GM12878 (cell line): ENCODE measurements at regions of chr1 and their contacts with region 1.

Region 1: DNA sequence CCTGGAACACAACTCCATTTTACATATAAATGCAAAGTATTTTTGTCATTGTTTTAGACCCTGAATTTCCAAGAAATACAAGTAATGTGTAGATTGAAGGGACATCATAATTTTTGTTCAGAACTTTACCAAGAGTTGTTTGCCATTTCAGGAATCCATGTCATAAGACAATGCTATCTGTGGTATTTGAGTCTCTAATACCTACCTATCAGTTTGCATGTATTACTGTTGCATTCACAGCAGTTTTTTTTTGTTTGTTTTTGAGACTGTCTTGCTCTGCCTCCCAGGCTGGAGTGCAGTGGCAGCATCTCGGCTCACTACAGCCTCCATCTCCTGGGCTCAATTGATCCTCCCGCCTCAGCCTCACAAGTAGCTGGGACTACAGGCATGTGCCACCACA is 17.1 kb downstream of the MPZ start:
- DNase-seq: no peak
- ATAC-seq: no peak
- H3K4me3 ChIP-seq: no peak overlapping the region
- H3K27ac ChIP-seq: no peak overlapping the region
- H3K4me1 ChIP-seq: peaks cover 2% of the 10 kb centered on the region; the same call in 1 of the 2 replicates
- H3K27me3 ChIP-seq: no peaks in the 10 kb centered on the region
- CTCF ChIP-seq: no peak
- EP300 ChIP-seq: no peak
- POLR2A ChIP-seq: no peak
- RAD21 ChIP-seq: no peak

Region 2: DNA sequence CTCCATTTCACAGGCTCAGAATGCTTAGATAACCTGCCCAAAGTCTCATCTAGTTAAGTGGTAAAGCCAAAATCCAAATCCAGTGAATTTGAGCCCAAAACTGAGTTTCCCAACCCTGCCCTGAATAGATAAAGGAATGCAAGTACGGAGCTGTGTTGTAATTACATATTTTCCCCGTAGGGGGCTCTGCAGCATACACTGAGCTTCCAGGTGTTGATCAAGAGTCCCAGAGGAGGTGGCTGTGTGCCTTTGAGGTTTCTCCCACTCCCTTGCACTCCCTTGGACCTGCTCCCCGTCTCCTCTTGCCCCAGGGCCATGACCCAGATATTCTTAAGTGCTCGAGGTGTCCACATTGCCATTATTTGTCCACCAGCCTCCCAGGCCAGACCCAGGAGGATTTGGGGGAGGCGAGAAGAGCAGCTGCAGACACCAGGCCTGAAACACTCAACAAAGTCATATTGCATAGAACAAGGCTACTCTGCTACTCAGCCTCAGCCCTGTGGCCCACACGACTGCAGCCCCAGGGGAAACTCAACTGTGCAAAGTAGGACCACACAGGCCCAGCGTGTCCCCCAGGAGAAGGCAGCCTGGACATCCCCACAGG is 515.0 kb before region 1 on chr1:
- CTCF ChIA-PET with region 1: no interaction called
- POLR2A ChIA-PET with region 1: no interaction called
- RAD21 ChIA-PET with region 1: no interaction called
- SMC1A ChIA-PET with region 1: no interaction called
- in situ Hi-C with region 1: no loop called
- intact Hi-C with region 1: no loop called
- DNase-seq: no peak
- ATAC-seq: peak; percentile 36
- H3K4me3 ChIP-seq: no peak overlapping the region
- H3K27ac ChIP-seq: no peak overlapping the region
- H3K4me1 ChIP-seq: peaks cover 50% of the 10 kb centered on the region
- H3K27me3 ChIP-seq: no peaks in the 10 kb centered on the region
- CTCF ChIP-seq: peak; percentile 66 to 78 (median 67)
- EP300 ChIP-seq: no peak
- POLR2A ChIP-seq: no peak
- RAD21 ChIP-seq: peak; percentile 81

Region 3: DNA sequence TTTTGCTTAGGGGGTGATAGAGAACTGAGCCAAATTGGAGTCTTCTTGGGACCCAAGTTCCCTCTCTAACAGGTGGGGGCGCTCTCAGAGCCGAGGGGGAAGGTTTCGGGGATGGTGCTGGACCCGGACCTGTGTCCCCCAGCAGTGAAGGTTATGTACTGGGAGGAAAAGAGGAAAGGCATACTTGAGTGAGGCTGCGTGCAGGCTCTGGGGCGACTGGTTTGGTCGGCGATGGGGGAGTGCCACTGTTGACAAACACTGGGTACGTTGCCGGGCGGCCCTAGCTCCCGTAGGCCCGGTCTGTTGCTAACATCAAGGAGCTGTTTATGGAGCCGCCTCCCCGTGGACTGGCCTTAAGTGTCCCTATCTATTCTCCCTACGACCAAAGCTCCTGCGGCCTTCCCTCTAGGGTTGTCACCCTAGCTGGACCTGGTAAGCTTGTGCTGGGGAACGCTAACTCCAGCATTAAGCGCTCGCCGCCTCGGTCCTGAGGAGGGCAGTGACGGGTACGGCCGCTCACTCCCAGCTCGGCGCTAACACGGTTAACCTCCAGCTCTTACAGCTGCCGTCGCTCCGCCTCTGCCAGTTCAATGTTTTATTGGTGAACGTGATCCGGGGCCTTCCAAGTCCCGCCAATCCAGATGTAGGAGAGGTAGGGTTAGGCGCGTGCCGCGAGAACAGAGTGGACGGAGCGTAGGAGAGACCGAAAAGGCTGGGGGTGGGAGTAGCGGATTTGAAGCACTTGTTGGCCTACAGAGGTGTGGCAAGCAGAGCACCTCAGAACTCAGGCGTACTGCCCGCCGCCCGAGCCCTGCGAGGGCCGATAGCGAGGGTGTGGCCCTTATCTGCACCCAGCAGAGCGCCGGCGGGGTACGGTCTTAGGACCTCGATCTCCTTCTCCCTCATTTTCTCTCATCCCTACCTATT is 126.6 kb before region 1 on chr1 and contains the start of gene PPOX:
- CTCF ChIA-PET with region 1: interaction called, 11 read pairs
- POLR2A ChIA-PET with region 1: interaction called, 4 read pairs
- RAD21 ChIA-PET with region 1: interaction called, 11 read pairs
- SMC1A ChIA-PET with region 1: no interaction called
- in situ Hi-C with region 1: no loop called
- intact Hi-C with region 1: no loop called
- DNase-seq: peak; percentile 92
- ATAC-seq: peak; percentile 97
- H3K4me3 ChIP-seq: peak within 1 kb of the TSS; percentile 86
- H3K27ac ChIP-seq: peak within 1 kb of the TSS; percentile 54
- H3K4me1 ChIP-seq: peaks cover 8% of the 10 kb centered on the region
- H3K27me3 ChIP-seq: no peaks in the 10 kb centered on the region
- CTCF ChIP-seq: peak; percentile 50 to 67 (median 61)
- EP300 ChIP-seq: no peak; a peak in 1 of 4 replicates
- POLR2A ChIP-seq: peak; percentile 88
- RAD21 ChIP-seq: peak; percentile 26; the same call in 1 of the 2 replicates
- polyA plus RNA-seq, gene PPOX: 8.9 to 16.3 TPM

Region 4: DNA sequence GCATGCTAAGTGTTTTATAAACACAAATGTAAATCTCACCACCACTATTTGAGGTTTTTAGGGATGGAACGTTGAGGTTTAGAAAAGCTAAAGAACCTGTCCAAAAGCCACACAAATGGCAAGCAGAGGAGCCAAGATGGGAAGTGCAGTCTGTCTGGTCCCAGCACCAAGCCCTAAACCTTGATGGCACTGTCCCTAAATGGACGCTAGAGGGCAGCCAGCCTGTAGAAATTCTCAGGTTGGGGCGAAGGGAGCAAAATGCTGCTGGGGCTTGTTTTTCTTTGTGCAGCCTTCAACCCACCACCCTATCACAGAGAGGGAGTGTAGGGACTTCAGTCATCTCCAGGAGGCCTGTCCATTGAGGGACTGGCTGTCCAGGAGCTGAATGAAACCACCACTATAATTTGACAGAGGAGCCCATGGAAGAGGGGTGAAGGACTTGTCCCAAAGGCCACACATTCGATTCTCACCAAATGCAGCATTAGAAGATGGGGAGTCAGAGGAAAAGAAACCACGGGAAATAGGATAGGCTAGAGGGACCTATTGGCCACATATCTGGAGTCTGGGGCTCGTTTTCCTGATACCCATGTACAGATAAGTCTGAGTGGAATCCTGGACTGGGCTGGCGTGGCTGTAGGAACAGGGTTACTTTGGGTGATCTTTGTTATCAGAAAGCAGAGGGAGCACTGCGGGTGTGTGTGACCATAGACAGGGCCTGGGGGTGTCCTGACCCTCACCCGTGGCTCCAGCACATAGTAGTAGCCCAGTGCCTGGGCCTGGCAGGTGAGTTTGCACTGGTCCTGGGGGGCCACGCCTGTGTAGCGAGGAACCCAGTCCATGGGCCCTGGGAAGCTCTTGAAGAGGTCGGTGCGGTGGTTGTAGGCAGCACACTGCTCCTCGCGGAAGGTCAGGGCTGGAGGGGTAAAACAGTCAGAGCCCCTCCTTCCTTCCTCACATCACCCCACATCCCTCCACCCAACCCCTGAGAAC is 99.9 kb before region 1 on chr1:
- CTCF ChIA-PET with region 1: interaction called, 37 read pairs
- POLR2A ChIA-PET with region 1: no interaction called
- RAD21 ChIA-PET with region 1: interaction called, 5 read pairs
- SMC1A ChIA-PET with region 1: interaction called, 4 read pairs
- in situ Hi-C with region 1: no loop called
- intact Hi-C with region 1: loop called (anchors 1 kb)
- DNase-seq: no peak
- ATAC-seq: peak; percentile 94
- H3K4me3 ChIP-seq: no peak overlapping the region
- H3K27ac ChIP-seq: no peak overlapping the region
- H3K4me1 ChIP-seq: peaks cover 19% of the 10 kb centered on the region
- H3K27me3 ChIP-seq: no peaks in the 10 kb centered on the region
- CTCF ChIP-seq: peak; percentile 89 to 95 (median 89)
- EP300 ChIP-seq: no peak
- POLR2A ChIP-seq: no peak
- RAD21 ChIP-seq: peak; percentile 84

Region 5: DNA sequence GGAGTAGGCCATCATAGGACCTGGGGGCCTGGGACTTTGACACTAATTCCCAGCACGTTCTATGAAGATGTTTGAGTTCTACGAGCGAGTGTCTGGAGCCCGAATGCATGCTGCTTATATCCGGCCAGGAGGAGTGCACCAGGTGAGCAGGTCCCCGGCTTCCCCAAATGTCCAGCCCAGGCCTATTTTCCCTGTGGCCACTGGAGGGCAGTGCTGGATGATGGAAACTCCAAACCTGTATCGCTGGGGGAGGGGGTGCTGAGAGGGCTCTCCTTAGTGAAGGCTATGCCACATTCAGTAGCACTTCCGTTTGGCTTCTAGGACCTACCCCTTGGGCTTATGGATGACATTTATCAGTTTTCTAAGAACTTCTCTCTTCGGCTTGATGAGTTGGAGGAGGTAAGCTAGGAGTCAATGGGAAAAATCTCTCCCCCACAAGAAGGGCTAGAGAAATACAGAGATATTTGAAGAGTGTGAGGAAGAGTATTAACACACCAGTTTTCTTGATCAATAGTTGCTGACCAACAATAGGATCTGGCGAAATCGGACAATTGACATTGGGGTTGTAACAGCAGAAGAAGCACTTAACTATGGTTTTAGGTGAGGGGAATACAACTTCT is 82.7 kb before region 1 on chr1:
- CTCF ChIA-PET with region 1: interaction called, 30 read pairs
- POLR2A ChIA-PET with region 1: no interaction called
- RAD21 ChIA-PET with region 1: interaction called, 6 read pairs
- SMC1A ChIA-PET with region 1: interaction called, 3 read pairs
- in situ Hi-C with region 1: no loop called
- intact Hi-C with region 1: loop called (anchors 5 kb)
- DNase-seq: no peak
- ATAC-seq: peak; percentile 99
- H3K4me3 ChIP-seq: no peak overlapping the region
- H3K27ac ChIP-seq: no peak overlapping the region
- H3K4me1 ChIP-seq: no peaks in the 10 kb centered on the region
- H3K27me3 ChIP-seq: no peaks in the 10 kb centered on the region
- CTCF ChIP-seq: peak; percentile 88 to 94 (median 89)
- EP300 ChIP-seq: no peak
- POLR2A ChIP-seq: no peak
- RAD21 ChIP-seq: peak; percentile 93

Region 6: GRCh38 chr1:161235957-161236773 is 56.5 kb before region 1 on chr1:
- CTCF ChIA-PET with region 1: interaction called, 37 read pairs
- POLR2A ChIA-PET with region 1: interaction called, 3 read pairs
- RAD21 ChIA-PET with region 1: interaction called, 22 read pairs
- SMC1A ChIA-PET with region 1: interaction called, 62 read pairs
- in situ Hi-C with region 1: no loop called
- intact Hi-C with region 1: no loop called
- DNase-seq: no peak
- ATAC-seq: no peak
- H3K4me3 ChIP-seq: no peak overlapping the region
- H3K27ac ChIP-seq: no peak overlapping the region
- H3K4me1 ChIP-seq: no peaks in the 10 kb centered on the region
- H3K27me3 ChIP-seq: no peaks in the 10 kb centered on the region
- CTCF ChIP-seq: no peak
- EP300 ChIP-seq: no peak
- POLR2A ChIP-seq: no peak
- RAD21 ChIP-seq: no peak

Region 7: DNA sequence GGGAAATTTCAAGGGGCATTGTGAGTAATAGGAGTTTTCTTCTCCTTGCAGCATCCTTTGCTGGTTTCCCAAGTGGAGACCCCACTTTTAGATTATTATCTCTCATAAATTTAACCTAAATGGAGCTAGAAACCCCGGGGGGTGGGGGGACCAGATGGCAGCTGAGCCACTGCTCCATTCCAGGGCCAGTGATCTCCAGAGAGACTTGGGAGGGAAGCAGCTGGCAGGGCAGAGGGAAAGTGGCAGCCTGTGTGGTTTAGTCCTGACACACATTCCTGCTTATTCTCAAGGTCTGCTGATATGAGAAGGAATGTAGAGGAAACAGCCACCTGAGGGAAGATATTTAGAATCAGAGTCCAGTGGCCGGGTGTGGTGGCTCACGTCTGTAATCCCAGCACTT is 17.8 kb before region 1 on chr1:
- CTCF ChIA-PET with region 1: interaction called, 14 read pairs
- POLR2A ChIA-PET with region 1: no interaction called
- RAD21 ChIA-PET with region 1: no interaction called
- SMC1A ChIA-PET with region 1: interaction called, 3 read pairs
- in situ Hi-C with region 1: no loop called
- intact Hi-C with region 1: no loop called
- DNase-seq: no peak
- ATAC-seq: no peak
- H3K4me3 ChIP-seq: no peak overlapping the region
- H3K27ac ChIP-seq: no peak overlapping the region
- H3K4me1 ChIP-seq: no peaks in the 10 kb centered on the region
- H3K27me3 ChIP-seq: no peaks in the 10 kb centered on the region; a peak in 1 of 4 replicates
- CTCF ChIP-seq: no peak
- EP300 ChIP-seq: no peak
- POLR2A ChIP-seq: no peak
- RAD21 ChIP-seq: no peak